A549 (cell line): ENCODE measurements at regions of chr19 and their contacts with region 1.

Region 1: DNA sequence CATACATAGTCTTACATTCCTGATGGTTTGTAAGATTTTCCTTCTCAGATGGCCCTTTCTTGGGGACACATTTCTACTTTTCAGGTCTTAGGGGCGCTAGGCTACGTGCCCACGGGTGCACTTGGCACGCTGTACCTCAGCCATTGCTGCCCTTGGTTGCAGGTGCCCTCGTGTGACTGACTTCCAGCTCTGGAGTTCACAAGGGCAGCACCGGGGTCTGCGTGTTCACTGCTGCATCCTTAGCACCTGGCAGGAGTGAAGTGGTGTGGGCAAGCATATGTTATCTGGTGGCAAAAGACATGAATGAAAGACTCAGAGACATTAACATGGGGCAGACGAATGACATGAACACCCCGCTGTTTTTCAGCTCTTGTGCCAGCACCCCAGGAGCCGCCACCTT is 13.3 kb upstream of the WDR88 start:
- DNase-seq: no peak
- ATAC-seq: peak; percentile 45 to 52; a peak in 5 of 6 replicates
- H3K4me3 ChIP-seq: no peak overlapping the region
- H3K27ac ChIP-seq: peak overlapping the region; percentile 1 to 27; a peak in 3 of 6 replicates
- H3K4me1 ChIP-seq: 0 out of 3 replicates have a peak, but pooled peaks cover 3% of the 10 kb centered on the region
- CTCF ChIP-seq: no peak
- EP300 ChIP-seq: no peak
- POLR2A ChIP-seq: no peak
- RAD21 ChIP-seq: no peak

Region 2: GRCh38 chr19:33010891-33011576 is 107.6 kb before region 1 on chr19:
- CTCF ChIA-PET with region 1: interaction called, 14 read pairs
- POLR2A ChIA-PET with region 1: no interaction called
- DNase-seq: no peak
- ATAC-seq: no peak
- H3K4me3 ChIP-seq: no peak overlapping the region
- H3K27ac ChIP-seq: no peak overlapping the region
- H3K4me1 ChIP-seq: no peaks in the 10 kb centered on the region
- CTCF ChIP-seq: no peak
- EP300 ChIP-seq: no peak
- POLR2A ChIP-seq: no peak
- RAD21 ChIP-seq: no peak

Region 3: DNA sequence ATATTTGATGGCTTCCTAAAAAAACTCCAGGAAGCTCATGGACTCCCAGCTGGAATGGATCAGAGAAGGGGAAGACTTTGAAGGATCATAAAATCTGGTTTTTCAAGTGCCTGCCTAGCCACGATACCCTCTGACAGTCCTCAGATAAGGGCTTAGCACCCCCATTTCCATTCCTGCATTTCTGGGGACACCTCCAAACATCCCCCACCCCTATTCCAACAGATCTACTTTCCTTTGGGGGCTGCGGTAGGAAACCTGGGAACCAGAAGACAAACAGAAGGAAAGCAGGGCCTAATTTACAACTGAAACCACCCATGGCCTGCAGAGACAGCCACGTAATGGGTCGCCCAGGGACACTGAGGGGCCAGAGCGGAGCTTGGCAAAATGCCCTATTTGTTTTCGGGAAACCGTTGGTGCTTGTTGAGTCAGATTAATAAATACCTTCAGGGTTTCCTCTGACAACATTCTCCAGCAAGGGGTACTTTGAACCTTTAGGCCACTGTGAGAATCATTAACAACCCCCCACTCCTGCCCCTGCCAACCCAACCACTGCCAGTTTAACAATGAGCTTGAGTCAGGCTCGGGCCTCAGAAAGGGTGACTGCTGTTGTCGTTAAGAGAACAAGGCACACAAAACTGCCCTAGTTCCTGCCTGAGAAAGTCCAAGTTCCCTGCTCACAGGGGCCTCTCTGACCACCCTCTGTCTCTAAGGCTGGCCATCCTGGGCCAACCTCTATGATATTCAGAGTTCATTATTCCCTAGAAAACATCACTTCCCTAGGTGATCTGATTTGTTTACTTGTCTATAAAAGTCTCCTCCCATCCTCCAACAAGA is 77.4 kb before region 1 on chr19:
- CTCF ChIA-PET with region 1: interaction called, 20 read pairs
- POLR2A ChIA-PET with region 1: no interaction called
- DNase-seq: peak; percentile 100
- ATAC-seq: peak; percentile 95 to 96
- H3K4me3 ChIP-seq: peak overlapping the region; percentile 14; the same call in 2 of the 3 replicates
- H3K27ac ChIP-seq: peak overlapping the region; percentile 87 to 92
- H3K4me1 ChIP-seq: peaks cover 53% of the 10 kb centered on the region
- CTCF ChIP-seq: no peak
- EP300 ChIP-seq: peak; percentile 93 to 97
- POLR2A ChIP-seq: no peak
- RAD21 ChIP-seq: peak; percentile 37 to 76

Region 4: DNA sequence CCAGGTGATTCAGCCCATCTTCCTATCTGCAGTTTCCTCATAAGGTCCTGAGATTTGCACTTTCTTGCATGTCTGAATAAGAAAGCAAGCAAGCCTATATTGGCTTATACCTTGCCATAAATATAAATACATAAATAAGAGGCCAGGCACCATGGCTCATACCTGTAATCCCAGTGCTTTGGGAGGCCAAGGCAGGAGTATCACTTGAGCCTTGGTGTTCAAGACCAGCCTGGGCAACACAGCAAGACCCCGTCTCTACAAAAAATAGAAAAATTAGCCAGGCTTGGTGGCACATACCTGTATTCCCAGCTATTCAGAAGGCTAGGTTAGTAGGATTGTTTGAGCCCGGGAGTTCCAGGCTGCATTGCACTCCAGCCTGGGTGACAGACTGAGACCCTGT is 43.1 kb before region 1 on chr19:
- CTCF ChIA-PET with region 1: interaction called, 39 read pairs
- POLR2A ChIA-PET with region 1: no interaction called
- DNase-seq: no peak
- ATAC-seq: no peak
- H3K4me3 ChIP-seq: no peak overlapping the region
- H3K27ac ChIP-seq: peak overlapping the region; percentile 11 to 92; a peak in 4 of 6 replicates
- H3K4me1 ChIP-seq: peaks cover 42% of the 10 kb centered on the region
- CTCF ChIP-seq: no peak
- EP300 ChIP-seq: no peak
- POLR2A ChIP-seq: no peak
- RAD21 ChIP-seq: no peak

Region 5: DNA sequence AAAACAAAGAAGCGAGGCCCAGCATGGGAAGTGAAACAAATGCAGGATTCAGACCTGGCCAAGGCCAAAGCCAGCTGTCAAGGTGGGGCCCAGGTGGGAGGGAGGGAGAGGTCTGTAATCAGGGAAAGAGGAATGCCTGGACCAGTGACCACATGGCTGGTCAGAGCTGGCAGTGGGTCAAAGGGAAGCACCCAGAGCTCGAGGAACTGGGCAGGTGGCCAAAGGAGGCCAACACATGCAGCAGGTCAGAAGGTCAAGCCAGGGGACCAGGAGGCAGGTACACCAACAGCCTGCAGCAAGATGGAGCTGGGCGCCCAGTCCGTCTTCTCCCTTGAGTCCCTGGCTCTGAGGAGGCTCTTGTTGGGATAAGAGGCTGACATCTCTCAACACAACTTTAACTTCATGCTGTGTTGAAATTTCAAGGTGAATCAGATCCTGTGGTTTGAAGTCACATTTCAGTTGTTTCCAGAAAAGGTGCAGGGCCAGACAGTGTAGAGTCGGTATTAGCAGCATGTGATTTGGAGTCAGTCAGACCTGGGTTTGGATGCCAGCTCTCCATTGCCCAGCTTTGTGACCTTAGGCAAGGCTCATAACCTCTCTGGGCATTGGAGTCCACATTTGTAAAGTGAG is 20.5 kb before region 1 on chr19:
- CTCF ChIA-PET with region 1: interaction called, 72 read pairs
- POLR2A ChIA-PET with region 1: no interaction called
- DNase-seq: peak in 1 of 2 experiments; percentile 40
- ATAC-seq: peak; percentile 9 to 27; a peak in 3 of 6 replicates
- H3K4me3 ChIP-seq: no peak overlapping the region
- H3K27ac ChIP-seq: peak overlapping the region in 1 of 2 experiments; percentile 35; a peak in 3 of 6 replicates
- H3K4me1 ChIP-seq: peaks cover 36% of the 10 kb centered on the region
- CTCF ChIP-seq: no peak
- EP300 ChIP-seq: no peak
- POLR2A ChIP-seq: no peak
- RAD21 ChIP-seq: no peak

Region 6: DNA sequence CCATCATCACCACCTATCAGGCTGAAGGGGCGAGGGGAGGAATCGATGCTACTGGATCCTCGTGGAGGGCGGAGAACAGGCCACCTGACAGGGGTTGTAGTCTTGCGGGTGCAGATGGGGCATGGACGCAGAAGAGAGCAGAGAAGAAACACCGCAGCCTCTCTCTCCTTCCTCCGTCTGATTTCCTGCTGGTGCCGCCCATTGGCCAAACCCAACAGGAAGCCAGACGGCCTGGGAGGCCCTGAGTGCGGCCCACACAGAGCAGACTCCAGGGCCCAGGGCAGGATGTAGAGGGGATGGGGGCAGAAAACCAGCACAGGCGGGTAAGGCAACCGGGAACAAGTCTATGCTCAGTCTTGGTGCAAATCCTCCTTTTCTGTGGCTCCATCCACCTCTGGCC is 168.3 kb after region 1 on chr19:
- CTCF ChIA-PET with region 1: no interaction called
- POLR2A ChIA-PET with region 1: no interaction called
- DNase-seq: no peak
- ATAC-seq: no peak
- H3K4me3 ChIP-seq: no peak overlapping the region
- H3K27ac ChIP-seq: no peak overlapping the region
- H3K4me1 ChIP-seq: peaks cover 18% of the 10 kb centered on the region
- CTCF ChIP-seq: no peak
- EP300 ChIP-seq: no peak
- POLR2A ChIP-seq: no peak
- RAD21 ChIP-seq: no peak